ENCODE measurements at regions of chr6 and their contacts with region 1.

Region 1: GRCh38 chr6:146857180-146857979 is 258.6 kb downstream of the ADGB start:
- DNase-seq: peak; percentile 72
- H3K4me3 ChIP-seq: no peak overlapping the region
- H3K27ac ChIP-seq: no peak overlapping the region
- H3K4me1 ChIP-seq: peaks cover 7% of the 10 kb centered on the region
- H3K27me3 ChIP-seq: no peaks in the 10 kb centered on the region
- CTCF ChIP-seq: peak; percentile 99

Region 2: GRCh38 chr6:146087386-146087785 is 770.0 kb before region 1 on chr6:
- CTCF ChIA-PET with region 1: no interaction called
- POLR2A ChIA-PET with region 1: no interaction called
- intact Hi-C with region 1: no loop called
- DNase-seq: no peak
- H3K4me3 ChIP-seq: no peak overlapping the region
- H3K27ac ChIP-seq: no peak overlapping the region
- H3K4me1 ChIP-seq: no peaks in the 10 kb centered on the region
- H3K27me3 ChIP-seq: no peaks in the 10 kb centered on the region
- CTCF ChIP-seq: no peak

Region 3: GRCh38 chr6:146460941-146461340 is 396.4 kb before region 1 on chr6:
- CTCF ChIA-PET with region 1: no interaction called
- POLR2A ChIA-PET with region 1: no interaction called
- intact Hi-C with region 1: no loop called
- DNase-seq: no peak
- H3K4me3 ChIP-seq: no peak overlapping the region
- H3K27ac ChIP-seq: no peak overlapping the region
- H3K4me1 ChIP-seq: no peaks in the 10 kb centered on the region
- H3K27me3 ChIP-seq: no peaks in the 10 kb centered on the region
- CTCF ChIP-seq: no peak

Region 4: DNA sequence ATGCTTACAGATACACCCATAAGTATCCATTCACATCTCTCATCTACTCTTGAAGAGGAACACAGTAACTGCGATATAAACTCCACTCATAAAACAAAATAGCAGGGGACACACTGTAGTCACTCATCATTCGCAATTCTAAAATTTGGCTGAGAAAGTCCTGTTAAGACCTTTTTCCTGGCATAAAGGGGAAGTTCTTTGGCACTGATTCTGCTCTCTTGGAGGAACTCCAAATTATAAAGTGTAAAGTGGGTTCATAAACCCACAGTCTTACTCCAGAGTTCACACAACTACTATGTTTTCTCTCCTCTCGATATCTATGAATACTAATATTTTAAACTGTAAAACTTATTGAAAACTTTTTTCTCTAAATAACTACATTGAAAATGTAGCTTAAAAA is 178.0 kb before region 1 on chr6:
- CTCF ChIA-PET with region 1: no interaction called
- POLR2A ChIA-PET with region 1: no interaction called
- intact Hi-C with region 1: no loop called
- DNase-seq: no peak
- H3K4me3 ChIP-seq: no peak overlapping the region
- H3K27ac ChIP-seq: no peak overlapping the region
- H3K4me1 ChIP-seq: no peaks in the 10 kb centered on the region
- H3K27me3 ChIP-seq: no peaks in the 10 kb centered on the region
- CTCF ChIP-seq: no peak

Region 5: GRCh38 chr6:147202516-147203312 is 345.3 kb after region 1 on chr6:
- CTCF ChIA-PET with region 1: no interaction called
- POLR2A ChIA-PET with region 1: no interaction called
- intact Hi-C with region 1: loop called (anchors 5 kb)
- DNase-seq: peak; percentile 97
- H3K4me3 ChIP-seq: peak overlapping the region; percentile 90
- H3K27ac ChIP-seq: peak overlapping the region; percentile 84
- H3K4me1 ChIP-seq: peaks cover 10% of the 10 kb centered on the region
- H3K27me3 ChIP-seq: no peaks in the 10 kb centered on the region
- CTCF ChIP-seq: no peak

Region 6: GRCh38 chr6:147222160-147222838 is 364.9 kb after region 1 on chr6:
- CTCF ChIA-PET with region 1: no interaction called
- POLR2A ChIA-PET with region 1: no interaction called
- intact Hi-C with region 1: loop called (anchors 5 kb)
- DNase-seq: peak; percentile 37
- H3K4me3 ChIP-seq: no peak overlapping the region
- H3K27ac ChIP-seq: no peak overlapping the region
- H3K4me1 ChIP-seq: peaks cover 2% of the 10 kb centered on the region
- H3K27me3 ChIP-seq: no peaks in the 10 kb centered on the region
- CTCF ChIP-seq: peak; percentile 57

Region 7: DNA sequence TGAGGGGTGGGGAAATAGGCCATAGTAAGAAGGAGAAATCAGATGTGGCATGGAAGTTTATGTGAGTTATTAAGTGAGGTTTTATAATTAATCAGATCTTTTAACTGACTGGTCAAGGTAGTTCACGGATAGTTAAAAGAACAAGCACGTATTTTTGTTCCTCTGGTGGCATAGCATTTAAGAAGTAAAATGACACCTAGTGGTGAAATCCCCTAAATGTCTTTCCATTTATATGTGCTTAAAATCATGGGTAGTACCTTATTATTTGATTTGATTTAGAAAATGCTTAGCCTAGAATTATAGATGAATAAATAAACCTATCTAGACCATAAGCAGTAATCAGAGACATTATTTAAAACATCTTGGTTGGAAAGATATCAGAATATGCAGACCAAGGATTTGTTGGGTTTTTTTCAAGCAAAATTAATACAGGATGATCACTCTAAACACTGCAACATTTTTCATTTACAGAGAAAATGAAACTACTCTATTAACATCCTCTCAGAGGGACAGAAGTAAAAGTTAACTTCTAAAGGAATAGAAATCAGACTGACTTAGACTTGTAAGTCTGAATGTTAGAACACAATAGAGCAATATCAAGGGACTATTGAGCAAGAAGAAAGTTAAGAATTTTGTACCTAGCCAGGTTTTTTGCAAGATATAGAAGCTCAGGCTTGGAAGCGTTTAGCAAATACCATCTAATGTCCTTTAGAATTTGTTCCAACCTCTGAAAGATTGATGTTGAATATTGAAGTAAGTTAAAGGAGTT is 427.9 kb after region 1 on chr6:
- CTCF ChIA-PET with region 1: no interaction called
- POLR2A ChIA-PET with region 1: no interaction called
- intact Hi-C with region 1: loop called (anchors 2 kb)
- DNase-seq: peak; percentile 48
- H3K4me3 ChIP-seq: no peak overlapping the region
- H3K27ac ChIP-seq: no peak overlapping the region
- H3K4me1 ChIP-seq: no peaks in the 10 kb centered on the region
- H3K27me3 ChIP-seq: no peaks in the 10 kb centered on the region
- CTCF ChIP-seq: peak; percentile 64

Region 8: DNA sequence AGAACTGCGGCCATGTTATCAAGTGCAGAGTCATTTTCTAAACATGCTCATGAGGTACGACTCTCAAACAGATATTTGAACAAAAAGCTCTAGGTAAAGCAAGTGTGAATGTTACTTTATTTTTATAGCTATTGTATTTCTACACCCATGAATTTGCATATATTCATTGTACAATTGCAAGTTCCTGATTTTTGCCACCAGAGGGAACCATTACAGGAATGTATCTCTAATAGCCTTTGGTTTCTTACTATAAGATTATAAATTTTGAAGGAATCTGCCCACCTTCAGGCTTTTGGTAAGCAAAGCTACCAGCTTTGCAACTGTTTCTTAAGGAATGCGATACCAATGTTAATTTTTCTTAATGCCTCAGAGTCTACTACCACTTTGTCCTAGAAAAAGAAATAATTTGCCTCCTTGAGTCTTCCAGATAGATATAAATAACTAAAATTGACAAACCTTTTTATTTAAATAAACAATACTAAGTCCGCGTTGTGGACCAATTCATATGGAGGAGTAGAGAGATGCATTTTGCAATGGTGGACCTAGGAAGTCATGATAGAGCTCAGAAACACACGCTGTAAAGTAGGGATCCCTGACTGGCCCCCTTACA is 525.7 kb after region 1 on chr6:
- CTCF ChIA-PET with region 1: no interaction called
- POLR2A ChIA-PET with region 1: no interaction called
- intact Hi-C with region 1: loop called (anchors 10 kb)
- DNase-seq: peak; percentile 65
- H3K4me3 ChIP-seq: no peak overlapping the region
- H3K27ac ChIP-seq: no peak overlapping the region
- H3K4me1 ChIP-seq: no peaks in the 10 kb centered on the region
- H3K27me3 ChIP-seq: no peaks in the 10 kb centered on the region
- CTCF ChIP-seq: peak; percentile 77

Region 9: DNA sequence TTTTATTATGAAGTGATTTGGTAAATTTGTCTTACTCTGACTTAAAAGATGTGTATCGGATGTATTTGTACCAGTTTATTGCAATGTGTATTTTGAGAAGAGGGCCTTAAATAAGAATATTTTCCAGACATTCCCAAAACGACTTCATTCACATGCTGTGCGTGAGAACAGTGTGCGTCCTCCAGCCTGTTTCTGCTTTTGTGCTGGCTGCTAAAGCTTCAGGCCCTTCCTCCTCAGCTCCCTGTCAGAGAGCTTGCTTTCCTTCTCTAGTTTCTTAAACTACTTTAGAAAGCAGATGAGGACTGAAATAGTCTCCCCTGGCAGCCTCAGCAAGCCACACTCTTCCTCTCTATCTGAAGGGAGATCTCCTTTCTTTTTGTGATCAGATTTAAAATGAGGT is 808.9 kb after region 1 on chr6:
- CTCF ChIA-PET with region 1: no interaction called
- POLR2A ChIA-PET with region 1: no interaction called
- intact Hi-C with region 1: no loop called
- DNase-seq: no peak
- H3K4me3 ChIP-seq: no peak overlapping the region
- H3K27ac ChIP-seq: no peak overlapping the region
- H3K4me1 ChIP-seq: peaks cover 14% of the 10 kb centered on the region
- H3K27me3 ChIP-seq: no peaks in the 10 kb centered on the region
- CTCF ChIP-seq: no peak

Measured in A673 (cell line).